ENCODE measurements at regions of chr15 and their contacts with region 1.

Region 1: GRCh38 chr15:74950078-74951000 is 6.2 kb downstream of the RPP25 start:
- DNase-seq: peak; percentile 94
- ATAC-seq: peak; percentile 79
- H3K4me3 Mint-ChIP-seq: no peak overlapping the region
- H3K27ac Mint-ChIP-seq: peak overlapping the region; percentile 36
- H3K4me1 Mint-ChIP-seq: peaks cover 37% of the 10 kb centered on the region
- H3K27me3 Mint-ChIP-seq: peaks cover 6% of the 10 kb centered on the region
- CTCF ChIP-seq: peak; percentile 95

Region 2: DNA sequence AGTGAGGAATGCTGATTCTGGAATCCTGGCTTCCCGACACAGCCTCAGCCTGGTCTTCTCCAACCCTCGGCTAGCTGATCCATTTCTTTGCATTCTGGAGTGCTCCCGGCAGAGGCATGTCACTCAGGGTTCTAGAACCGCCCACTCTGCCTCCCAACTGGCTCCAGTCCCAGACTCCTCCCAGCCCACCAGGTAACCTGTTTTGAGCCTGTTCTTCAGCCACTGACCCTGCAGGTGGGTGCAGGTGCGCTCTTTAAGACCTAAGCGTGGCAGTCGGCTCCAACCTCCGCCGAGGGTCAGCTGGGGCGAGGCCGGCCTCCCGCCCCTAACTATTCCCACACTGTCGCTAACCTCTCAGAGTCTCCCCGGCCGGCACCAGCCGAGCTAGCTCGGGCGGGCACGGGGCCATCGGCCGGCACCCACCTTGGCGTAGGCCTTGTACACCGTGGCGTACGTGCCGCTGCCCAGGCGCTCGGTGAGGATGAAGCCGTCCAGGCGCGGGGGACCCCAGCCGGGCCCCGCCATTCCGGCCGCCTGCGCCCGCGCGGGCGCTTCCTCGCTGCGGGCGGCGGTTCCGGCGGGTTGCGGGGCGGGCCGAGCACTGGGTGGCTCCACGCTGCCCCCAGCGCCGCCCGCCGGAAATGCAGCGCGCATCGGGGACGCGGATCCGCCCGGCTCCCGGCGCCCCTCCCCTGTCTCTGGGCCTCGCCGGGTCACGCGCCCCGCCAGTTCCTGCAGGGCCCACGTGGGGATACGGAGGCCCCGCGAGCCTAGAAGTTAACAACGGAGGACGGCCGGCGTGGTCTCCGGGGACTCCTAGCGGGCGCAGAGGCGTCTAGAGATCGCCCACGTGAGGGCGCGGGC is 107.5 kb before region 1 on chr15 and contains the start of gene ULK3:
- CTCF ChIA-PET with region 1: interaction called, 23 read pairs
- POLR2A ChIA-PET with region 1: no interaction called
- DNase-seq: peak; percentile 87
- ATAC-seq: peak; percentile 87
- H3K4me3 Mint-ChIP-seq: peak within 1 kb of the TSS; percentile 87
- H3K27ac Mint-ChIP-seq: peak within 1 kb of the TSS; percentile 91
- H3K4me1 Mint-ChIP-seq: peaks cover 21% of the 10 kb centered on the region
- H3K27me3 Mint-ChIP-seq: no peaks in the 10 kb centered on the region
- CTCF ChIP-seq: peak; percentile 76
- total RNA-seq, gene ULK3: 34.4 to 38.9 TPM (median 37.4 TPM) in 3 replicates

Region 3: DNA sequence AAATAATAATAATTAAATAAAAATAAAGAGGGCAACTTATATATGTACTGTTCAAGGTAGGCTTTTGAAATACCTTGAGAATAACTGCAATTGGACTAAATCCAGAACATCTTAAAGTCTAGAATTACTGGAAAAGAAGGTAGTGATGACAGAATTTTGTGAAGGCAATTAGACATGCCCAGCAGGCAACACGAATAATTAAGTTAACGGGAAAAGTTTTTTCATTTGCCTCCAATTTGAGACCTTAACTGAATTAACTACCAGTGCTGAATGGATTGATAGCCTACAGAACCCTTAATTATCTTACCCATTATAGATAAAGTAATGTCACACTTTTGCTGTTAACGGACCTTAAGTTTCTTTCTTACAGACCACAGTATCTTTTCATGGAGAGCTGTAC is 25.8 kb before region 1 on chr15:
- CTCF ChIA-PET with region 1: no interaction called
- POLR2A ChIA-PET with region 1: no interaction called
- DNase-seq: no peak
- ATAC-seq: no peak
- H3K4me3 Mint-ChIP-seq: no peak overlapping the region
- H3K27ac Mint-ChIP-seq: no peak overlapping the region
- H3K4me1 Mint-ChIP-seq: no peaks in the 10 kb centered on the region
- H3K27me3 Mint-ChIP-seq: no peaks in the 10 kb centered on the region
- CTCF ChIP-seq: no peak

Region 4: DNA sequence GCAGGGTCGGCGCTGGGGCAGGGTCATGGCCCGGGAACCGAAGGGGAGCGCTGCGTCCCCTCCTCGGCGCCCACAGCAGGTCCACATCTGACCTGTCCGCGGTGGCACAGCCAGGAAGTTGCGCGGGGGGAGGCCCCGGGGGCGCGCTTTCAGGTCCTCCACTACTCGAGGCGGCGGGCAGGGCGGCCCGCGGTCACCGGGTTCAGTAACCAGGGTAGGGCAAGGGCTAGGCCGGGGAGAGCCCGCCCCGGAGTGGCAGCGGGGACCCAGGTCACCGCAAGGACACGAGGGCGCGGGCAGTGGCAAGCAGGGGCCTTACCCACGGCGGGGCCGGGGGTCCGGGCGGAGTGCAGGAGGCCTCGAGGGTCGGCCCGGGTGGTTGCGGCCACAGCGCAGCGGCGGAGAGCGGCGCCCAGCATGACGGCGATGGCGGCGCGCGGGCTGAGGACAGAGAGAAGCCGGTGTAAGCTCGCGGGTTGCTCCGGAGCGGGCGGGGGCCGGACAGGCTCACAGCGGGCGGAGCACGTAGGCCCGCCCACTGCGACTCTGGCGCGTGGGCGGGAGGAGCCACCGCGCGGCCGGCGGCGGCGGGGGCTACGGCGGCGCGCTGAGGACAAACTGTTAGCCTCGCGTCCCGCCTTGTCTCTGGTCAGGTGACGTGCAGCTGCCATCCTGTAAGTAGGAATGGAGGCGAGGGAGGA is 12.6 kb before region 1 on chr15 and contains the start of gene COX5A:
- CTCF ChIA-PET with region 1: interaction called, 43 read pairs
- POLR2A ChIA-PET with region 1: interaction called, 5 read pairs
- DNase-seq: peak; percentile 86
- ATAC-seq: peak; percentile 92
- H3K4me3 Mint-ChIP-seq: peak within 1 kb of the TSS; percentile 91
- H3K27ac Mint-ChIP-seq: peak within 1 kb of the TSS; percentile 91
- H3K4me1 Mint-ChIP-seq: peaks cover 8% of the 10 kb centered on the region
- H3K27me3 Mint-ChIP-seq: no peaks in the 10 kb centered on the region; the same call in none of the 2 replicates
- CTCF ChIP-seq: no peak
- total RNA-seq, gene COX5A: 336 to 355 TPM (median 354 TPM) in 3 replicates

Region 5: GRCh38 chr15:74988007-74988800 is 37.9 kb after region 1 on chr15:
- CTCF ChIA-PET with region 1: interaction called, 20 read pairs
- POLR2A ChIA-PET with region 1: interaction called, 3 read pairs
- DNase-seq: peak; percentile 74
- ATAC-seq: peak; percentile 94
- H3K4me3 Mint-ChIP-seq: no peak overlapping the region
- H3K27ac Mint-ChIP-seq: no peak overlapping the region
- H3K4me1 Mint-ChIP-seq: peaks cover 5% of the 10 kb centered on the region
- H3K27me3 Mint-ChIP-seq: peaks cover 21% of the 10 kb centered on the region
- CTCF ChIP-seq: 0 out of 2 replicates have a peak, but pooled peaks have one; percentile 30

Region 6: DNA sequence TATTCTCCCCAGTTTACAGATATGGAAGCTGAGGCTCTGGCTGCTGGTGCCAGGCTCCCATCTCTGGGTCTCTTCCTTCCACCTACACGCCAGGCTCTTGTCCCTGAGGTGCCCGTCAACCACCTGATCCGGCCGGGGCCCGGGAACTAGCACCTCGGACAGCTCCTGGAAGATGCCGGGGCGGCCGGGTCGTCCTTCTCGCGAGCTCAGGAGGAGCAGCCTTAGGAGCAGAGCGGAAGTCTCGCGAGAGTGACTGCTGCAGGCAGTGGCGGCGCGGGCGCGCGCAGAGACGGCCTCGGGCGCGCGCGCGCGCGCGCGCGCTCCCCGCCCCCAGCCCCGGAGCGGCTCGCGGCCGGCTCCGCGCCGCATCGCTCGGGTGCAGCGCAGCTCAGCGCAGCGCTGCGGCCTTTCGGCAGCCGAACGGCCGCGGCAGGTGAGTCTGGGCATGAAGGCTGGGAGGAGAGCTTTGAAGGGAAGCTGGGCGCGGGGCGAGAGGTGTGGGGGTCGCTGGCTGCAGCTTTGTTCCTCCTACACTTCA is 45.0 kb after region 1 on chr15 and contains the start of gene SCAMP5:
- CTCF ChIA-PET with region 1: interaction called, 15 read pairs
- POLR2A ChIA-PET with region 1: no interaction called
- DNase-seq: peak; percentile 99
- ATAC-seq: peak; percentile 88
- H3K4me3 Mint-ChIP-seq: peak within 1 kb of the TSS; percentile 79
- H3K27ac Mint-ChIP-seq: no peak within 1 kb of the TSS
- H3K4me1 Mint-ChIP-seq: peaks cover 20% of the 10 kb centered on the region
- H3K27me3 Mint-ChIP-seq: peaks cover 22% of the 10 kb centered on the region
- CTCF ChIP-seq: no peak
- total RNA-seq, gene SCAMP5: 65.7 to 70.1 TPM (median 67.0 TPM) in 3 replicates

Measured in WTC11 (cell line).